Activated naive CD4-positive, alpha-beta T cell treated with anti-CD3 and anti-CD28 coated beads for 36 hours (primary cell): ENCODE measurements at regions of chr2 and their contacts with region 1.

Region 1: GRCh38 chr2:73233154-73233931 is at the start of gene PRADC1:
- DNase-seq: peak; percentile 97
- H3K4me3 Mint-ChIP-seq: peak within 1 kb of the TSS; percentile 88
- H3K27ac Mint-ChIP-seq: peak within 1 kb of the TSS; percentile 77
- H3K4me1 Mint-ChIP-seq: peaks cover 31% of the 10 kb centered on the region
- H3K27me3 Mint-ChIP-seq: no peaks in the 10 kb centered on the region
- total RNA-seq, gene PRADC1: 10.1 to 10.2 TPM

Region 2: GRCh38 chr2:71331581-71332434 is 1901.5 kb before region 1 on chr2 and contains the start of gene ZNF638:
- CTCF ChIA-PET with region 1: no interaction called
- intact Hi-C with region 1: loop called (anchors 5 kb)
- DNase-seq: peak; percentile 93
- H3K4me3 Mint-ChIP-seq: peak within 1 kb of the TSS; percentile 99
- H3K27ac Mint-ChIP-seq: peak within 1 kb of the TSS; percentile 98
- H3K4me1 Mint-ChIP-seq: peaks cover 37% of the 10 kb centered on the region
- H3K27me3 Mint-ChIP-seq: no peaks in the 10 kb centered on the region
- total RNA-seq, gene ZNF638: 79.8 to 84.0 TPM

Region 3: GRCh38 chr2:73112913-73113633 is 120.3 kb before region 1 on chr2 and contains the start of gene RAB11FIP5:
- CTCF ChIA-PET with region 1: no interaction called
- intact Hi-C with region 1: loop called (anchors 1 kb)
- DNase-seq: peak; percentile 78
- H3K4me3 Mint-ChIP-seq: peak within 1 kb of the TSS; percentile 81
- H3K27ac Mint-ChIP-seq: no peak within 1 kb of the TSS
- H3K4me1 Mint-ChIP-seq: peaks cover 21% of the 10 kb centered on the region
- H3K27me3 Mint-ChIP-seq: no peaks in the 10 kb centered on the region
- total RNA-seq, gene RAB11FIP5: 7.3 to 7.4 TPM

Region 4: DNA sequence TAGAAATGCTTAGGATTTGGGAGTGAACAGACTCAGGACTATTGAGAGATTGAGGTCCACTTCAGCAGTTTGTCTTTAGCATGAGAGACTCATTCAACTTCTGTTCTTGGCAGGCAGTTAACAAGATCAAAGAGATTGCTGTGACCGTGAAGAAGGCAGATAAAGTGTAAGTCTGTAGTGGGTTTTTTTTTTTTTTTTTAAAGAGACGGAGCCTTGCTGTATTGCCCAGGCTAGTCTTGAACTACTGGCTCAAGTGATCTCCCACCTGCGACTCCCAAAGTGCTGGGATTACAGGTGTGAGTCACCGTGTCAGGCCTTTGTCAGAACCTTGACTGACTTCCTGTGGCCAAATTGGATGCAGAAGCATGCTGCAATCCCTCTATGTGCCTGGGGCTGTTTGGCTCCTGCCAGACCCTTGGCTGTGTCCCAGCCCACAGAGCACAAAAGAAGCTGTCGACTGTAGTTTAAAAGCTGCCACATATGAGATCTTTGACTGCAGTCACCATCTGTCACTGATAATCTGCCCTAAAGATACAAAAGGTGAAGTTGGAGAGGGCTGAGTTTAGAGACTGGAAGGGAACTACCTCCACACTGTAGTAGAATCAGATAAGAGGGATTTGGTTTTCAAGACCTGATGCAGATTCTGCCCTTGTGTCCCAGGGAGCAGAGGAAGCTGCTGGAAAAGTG is 10.7 kb after region 1 on chr2:
- CTCF ChIA-PET with region 1: interaction called, 7 read pairs
- intact Hi-C with region 1: loop called (anchors 1 kb)
- DNase-seq: no peak
- H3K4me3 Mint-ChIP-seq: no peak overlapping the region
- H3K27ac Mint-ChIP-seq: peak overlapping the region; percentile 71
- H3K4me1 Mint-ChIP-seq: peaks cover 31% of the 10 kb centered on the region
- H3K27me3 Mint-ChIP-seq: no peaks in the 10 kb centered on the region

Region 5: DNA sequence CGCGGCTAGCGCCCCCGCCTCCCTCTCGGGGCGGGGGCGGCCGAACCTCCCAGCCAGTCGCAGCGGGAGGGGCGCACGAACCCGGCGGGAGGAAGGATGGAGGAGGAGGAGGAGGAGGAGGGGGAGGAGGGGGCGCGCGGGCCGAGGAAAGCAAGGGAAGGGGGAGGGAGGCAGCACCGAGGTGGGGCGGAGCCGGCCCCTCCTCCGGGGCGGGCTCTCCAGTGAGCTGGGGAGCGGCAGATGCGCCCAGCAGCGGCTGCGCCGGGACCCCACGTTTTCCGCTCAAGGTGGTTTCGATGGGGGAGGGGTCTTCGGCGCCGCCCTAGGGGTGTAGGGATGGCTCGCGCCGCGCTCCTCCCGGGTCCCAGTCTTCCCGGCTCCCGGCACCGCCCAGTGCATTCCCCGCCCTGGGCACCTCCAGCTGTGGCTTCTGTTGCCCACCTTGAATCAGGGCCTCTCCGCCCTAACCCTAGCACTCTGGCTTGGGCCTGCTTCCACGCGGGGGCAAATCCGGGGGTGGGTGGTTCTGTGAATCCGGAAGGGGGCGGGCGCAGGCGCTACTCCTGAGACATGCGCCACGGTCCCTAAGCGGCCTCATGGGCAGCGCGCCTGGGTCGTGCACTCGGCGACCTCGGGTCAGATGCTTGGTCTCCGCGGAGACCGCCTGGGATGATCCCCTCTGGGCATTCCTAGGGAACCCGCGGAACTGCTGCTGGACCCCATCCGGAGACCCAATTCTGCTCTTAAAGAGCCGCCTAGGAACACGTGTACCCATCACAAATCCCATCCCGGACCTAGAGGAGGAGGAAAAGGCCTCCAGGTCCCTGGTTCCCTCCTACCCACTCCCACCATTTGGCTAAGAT is 51.2 kb after region 1 on chr2 and contains the start of gene FBXO41:
- CTCF ChIA-PET with region 1: interaction called, 10 read pairs
- intact Hi-C with region 1: loop called (anchors 1 kb)
- DNase-seq: peak; percentile 65
- H3K4me3 Mint-ChIP-seq: peak within 1 kb of the TSS; percentile 80
- H3K27ac Mint-ChIP-seq: peak within 1 kb of the TSS; percentile 53
- H3K4me1 Mint-ChIP-seq: peaks cover 11% of the 10 kb centered on the region
- H3K27me3 Mint-ChIP-seq: peaks cover 14% of the 10 kb centered on the region
- total RNA-seq, gene FBXO41: 11.0 to 11.8 TPM

Region 6: DNA sequence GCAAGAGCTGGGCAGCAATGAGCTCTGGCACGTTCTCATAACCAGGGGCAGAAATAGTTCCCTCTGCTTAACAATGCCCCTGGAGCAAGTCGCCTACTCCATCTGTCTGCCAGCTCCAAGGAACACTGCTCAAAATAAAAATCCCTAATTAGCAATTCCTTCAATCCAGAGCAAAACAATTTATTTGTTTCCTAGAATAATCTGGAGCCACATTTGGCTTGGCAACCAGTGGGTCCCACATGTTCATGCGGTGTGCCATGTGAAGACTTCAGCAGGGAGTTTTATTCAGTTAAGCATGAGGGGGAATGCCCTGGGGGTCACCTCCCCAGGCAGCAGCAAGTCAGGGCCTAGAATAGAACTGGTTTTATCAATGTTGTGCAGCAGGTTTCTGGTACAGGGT is 67.6 kb after region 1 on chr2:
- CTCF ChIA-PET with region 1: no interaction called
- intact Hi-C with region 1: no loop called
- DNase-seq: no peak
- H3K4me3 Mint-ChIP-seq: no peak overlapping the region
- H3K27ac Mint-ChIP-seq: no peak overlapping the region
- H3K4me1 Mint-ChIP-seq: no peaks in the 10 kb centered on the region
- H3K27me3 Mint-ChIP-seq: peaks cover 37% of the 10 kb centered on the region

Region 7: GRCh38 chr2:73736855-73737779 is 503.8 kb after region 1 on chr2 and contains the start of gene TPRKB:
- CTCF ChIA-PET with region 1: no interaction called
- intact Hi-C with region 1: loop called (anchors 1 kb)
- DNase-seq: peak; percentile 99
- H3K4me3 Mint-ChIP-seq: peak within 1 kb of the TSS; percentile 88
- H3K27ac Mint-ChIP-seq: peak within 1 kb of the TSS; percentile 76
- H3K4me1 Mint-ChIP-seq: peaks cover 15% of the 10 kb centered on the region
- H3K27me3 Mint-ChIP-seq: no peaks in the 10 kb centered on the region
- total RNA-seq, gene TPRKB: 30.5 to 32.5 TPM

Region 8: DNA sequence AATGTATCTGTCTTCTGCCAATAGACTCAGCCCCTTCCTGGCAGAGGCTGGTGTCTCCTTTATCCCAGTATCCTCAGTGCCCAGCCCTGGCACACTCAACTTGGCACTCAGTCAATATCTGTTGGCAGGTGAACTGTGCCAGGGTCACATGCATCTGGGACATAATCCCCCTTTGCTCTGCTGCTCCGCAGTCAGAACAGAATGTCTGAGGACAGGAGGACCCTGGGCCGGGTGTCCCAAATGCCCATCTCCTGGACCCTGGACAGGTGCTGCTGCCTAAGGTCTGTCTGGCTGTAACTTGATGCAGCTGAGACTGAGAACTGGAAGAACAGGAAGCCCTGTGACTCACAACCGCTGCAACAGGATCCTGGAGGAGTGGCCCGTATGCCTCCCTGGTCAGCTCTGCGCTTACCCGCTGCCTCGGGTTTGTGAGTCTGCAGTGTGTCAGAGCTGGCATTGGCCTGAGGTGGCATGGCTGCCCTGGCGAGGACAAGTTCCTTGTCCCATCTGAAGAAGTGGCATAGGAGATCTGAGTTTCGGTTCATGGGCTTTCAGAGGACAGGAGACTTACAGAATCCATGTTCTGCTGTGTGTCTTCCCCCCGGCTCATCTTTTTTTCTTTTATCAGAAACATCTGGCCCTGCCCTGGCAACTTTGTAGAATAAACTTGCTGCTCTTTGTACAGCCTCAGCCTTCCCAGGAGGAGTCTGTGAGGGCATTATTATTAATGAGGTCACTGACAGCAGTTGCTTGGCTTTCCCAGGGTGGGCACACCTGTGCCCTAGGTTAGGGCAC is 1612.1 kb after region 1 on chr2:
- CTCF ChIA-PET with region 1: no interaction called
- intact Hi-C with region 1: loop called (anchors 10 kb)
- DNase-seq: peak; percentile 61
- H3K4me3 Mint-ChIP-seq: no peak overlapping the region
- H3K27ac Mint-ChIP-seq: peak overlapping the region; percentile 33
- H3K4me1 Mint-ChIP-seq: peaks cover 95% of the 10 kb centered on the region
- H3K27me3 Mint-ChIP-seq: no peaks in the 10 kb centered on the region